H1 (cell line): ENCODE measurements at regions of chr9 and their contacts with region 1.

Region 1: GRCh38 chr9:130243015-130243734 is 22.4 kb upstream of the HMCN2 start:
- DNase-seq: peak in 1 of 2 experiments; percentile 98
- H3K4me3 ChIP-seq: peak overlapping the region in 1 of 4 experiments; percentile 27; a peak in 3 of 8 replicates
- H3K27ac ChIP-seq: no peak overlapping the region
- H3K4me1 ChIP-seq: peaks cover 0 to 9% (median 4%) of the 10 kb centered on the region in 4 experiments; a peak in 4 of 7 replicates
- H3K27me3 ChIP-seq: peaks cover 0 to 4% (median 0%) of the 10 kb centered on the region in 4 experiments; a peak in 2 of 7 replicates
- CTCF ChIP-seq: peak in 2 of 3 experiments; percentile 83 to 97; a peak in 3 of 4 replicates
- EP300 ChIP-seq: no peak
- POLR2A ChIP-seq: no peak
- RAD21 ChIP-seq: peak; percentile 62 to 75

Region 2: DNA sequence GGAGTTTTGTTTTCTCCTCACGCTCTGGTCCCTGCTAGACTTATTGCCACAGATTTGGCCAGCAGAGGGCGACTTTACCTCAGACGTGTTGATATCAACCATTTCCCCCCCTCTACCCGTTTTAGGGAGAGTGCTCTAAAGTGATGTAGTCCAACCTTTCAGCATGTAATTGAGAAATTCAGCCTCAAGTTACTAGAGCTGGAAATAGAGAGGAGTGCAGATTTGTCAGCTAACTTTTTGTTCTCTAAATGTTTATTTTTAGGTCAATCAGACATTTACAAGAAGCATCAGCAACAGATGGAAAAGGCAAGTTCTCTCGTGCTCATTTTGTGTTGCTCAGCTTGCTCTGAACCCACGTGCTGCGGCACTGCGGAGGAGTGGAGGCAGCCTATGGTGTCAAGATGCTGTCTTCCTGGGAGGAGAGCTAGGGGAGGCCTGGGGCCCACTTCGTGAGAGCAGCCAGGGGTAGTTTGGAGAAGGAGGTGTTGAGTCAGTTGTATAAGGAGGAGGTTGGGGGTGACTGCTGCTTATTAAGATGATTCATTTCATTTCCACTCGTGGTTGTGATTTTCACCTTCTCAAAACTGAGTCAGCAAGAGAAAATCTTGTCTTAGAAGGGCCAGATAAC is 135.8 kb before region 1 on chr9:
- CTCF ChIA-PET with region 1: interaction called, 21 read pairs
- POLR2A ChIA-PET with region 1: interaction called, 4 read pairs
- DNase-seq: peak; percentile 19 to 89
- H3K4me3 ChIP-seq: no peak overlapping the region
- H3K27ac ChIP-seq: no peak overlapping the region
- H3K4me1 ChIP-seq: peaks cover 0 to 3% (median 0%) of the 10 kb centered on the region in 4 experiments; a peak in 1 of 7 replicates
- H3K27me3 ChIP-seq: no peaks in the 10 kb centered on the region
- CTCF ChIP-seq: peak; percentile 56 to 86 (median 84)
- EP300 ChIP-seq: no peak
- POLR2A ChIP-seq: no peak
- RAD21 ChIP-seq: peak; percentile 91

Region 3: DNA sequence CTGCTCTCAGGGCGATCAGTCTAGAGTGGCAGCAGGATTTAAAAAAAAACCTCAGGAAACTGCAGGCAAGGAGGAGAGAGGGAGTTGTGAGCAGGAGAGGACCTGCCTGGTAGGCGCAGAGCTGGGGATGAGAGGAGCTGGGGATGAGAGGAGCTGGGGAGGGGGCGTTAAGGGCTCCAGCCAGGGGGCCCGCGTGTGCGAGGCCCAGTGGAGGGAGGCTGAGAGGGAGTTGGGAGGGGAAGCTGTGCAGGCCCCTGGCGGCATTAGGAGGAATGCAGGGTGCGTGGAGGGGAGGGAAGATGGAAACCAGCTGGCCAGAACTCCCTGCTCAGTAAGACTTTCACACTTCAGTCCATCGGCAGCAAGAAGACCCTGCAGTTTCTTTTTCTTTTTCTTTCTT is 22.8 kb before region 1 on chr9:
- CTCF ChIA-PET with region 1: interaction called, 16 read pairs
- POLR2A ChIA-PET with region 1: interaction called, 5 read pairs
- DNase-seq: no peak
- H3K4me3 ChIP-seq: no peak overlapping the region
- H3K27ac ChIP-seq: no peak overlapping the region
- H3K4me1 ChIP-seq: peaks cover 0 to 7% (median 0%) of the 10 kb centered on the region in 4 experiments; a peak in 5 of 7 replicates
- H3K27me3 ChIP-seq: no peaks in the 10 kb centered on the region
- CTCF ChIP-seq: peak in 2 of 3 experiments; percentile 10 to 29; a peak in 2 of 4 replicates
- EP300 ChIP-seq: no peak
- POLR2A ChIP-seq: no peak
- RAD21 ChIP-seq: peak; percentile 14 to 22; a peak in 2 of 4 replicates

Region 4: DNA sequence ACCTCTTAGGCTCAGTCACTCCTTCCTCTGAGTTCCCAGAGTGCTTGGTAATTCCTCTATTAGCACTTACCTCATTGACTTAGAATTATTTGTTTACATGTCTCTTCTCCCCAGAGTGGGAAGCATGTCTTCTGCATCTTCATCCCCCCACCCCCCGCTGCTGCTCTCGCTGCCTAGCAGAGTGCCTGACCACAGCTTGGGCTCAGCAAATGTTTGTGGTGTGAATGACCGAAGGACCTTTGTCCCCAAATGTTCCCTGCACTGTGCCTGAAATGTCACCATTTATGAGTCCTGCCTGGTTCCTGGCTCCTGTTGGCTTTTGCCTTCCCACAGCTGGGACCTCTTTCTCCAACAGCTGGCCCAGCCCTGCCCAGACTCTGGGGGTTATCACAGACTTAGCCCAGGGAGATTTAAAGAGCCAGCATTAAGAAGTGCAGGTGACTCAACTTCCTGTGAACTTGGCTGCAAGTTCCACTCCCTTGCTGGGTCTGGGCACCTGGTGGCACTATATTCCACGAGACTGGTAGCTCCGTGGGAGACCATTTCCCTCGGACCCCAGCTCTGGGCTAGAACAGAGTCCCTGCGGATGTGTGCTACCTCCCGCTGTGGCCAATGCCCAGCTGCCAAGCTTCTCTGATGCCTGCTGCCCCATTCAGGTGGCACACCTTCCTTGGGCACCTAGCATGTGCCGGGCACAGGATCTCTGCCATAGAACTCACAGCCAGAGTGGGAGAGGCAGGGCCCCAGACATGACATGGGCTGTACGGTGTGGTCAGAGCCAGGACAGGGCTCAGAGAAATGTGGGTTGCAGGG is 20.6 kb after region 1 on chr9:
- CTCF ChIA-PET with region 1: interaction called, 22 read pairs
- POLR2A ChIA-PET with region 1: interaction called, 4 read pairs
- DNase-seq: no peak
- H3K4me3 ChIP-seq: no peak overlapping the region
- H3K27ac ChIP-seq: no peak overlapping the region
- H3K4me1 ChIP-seq: peaks cover 10 to 24% (median 15%) of the 10 kb centered on the region in 4 experiments
- H3K27me3 ChIP-seq: peaks cover 0 to 20% (median 14%) of the 10 kb centered on the region in 4 experiments; a peak in 6 of 7 replicates
- CTCF ChIP-seq: peak in 1 of 3 experiments; percentile 14; a peak in 1 of 4 replicates
- EP300 ChIP-seq: no peak
- POLR2A ChIP-seq: no peak
- RAD21 ChIP-seq: peak; percentile 22 to 45

Region 5: DNA sequence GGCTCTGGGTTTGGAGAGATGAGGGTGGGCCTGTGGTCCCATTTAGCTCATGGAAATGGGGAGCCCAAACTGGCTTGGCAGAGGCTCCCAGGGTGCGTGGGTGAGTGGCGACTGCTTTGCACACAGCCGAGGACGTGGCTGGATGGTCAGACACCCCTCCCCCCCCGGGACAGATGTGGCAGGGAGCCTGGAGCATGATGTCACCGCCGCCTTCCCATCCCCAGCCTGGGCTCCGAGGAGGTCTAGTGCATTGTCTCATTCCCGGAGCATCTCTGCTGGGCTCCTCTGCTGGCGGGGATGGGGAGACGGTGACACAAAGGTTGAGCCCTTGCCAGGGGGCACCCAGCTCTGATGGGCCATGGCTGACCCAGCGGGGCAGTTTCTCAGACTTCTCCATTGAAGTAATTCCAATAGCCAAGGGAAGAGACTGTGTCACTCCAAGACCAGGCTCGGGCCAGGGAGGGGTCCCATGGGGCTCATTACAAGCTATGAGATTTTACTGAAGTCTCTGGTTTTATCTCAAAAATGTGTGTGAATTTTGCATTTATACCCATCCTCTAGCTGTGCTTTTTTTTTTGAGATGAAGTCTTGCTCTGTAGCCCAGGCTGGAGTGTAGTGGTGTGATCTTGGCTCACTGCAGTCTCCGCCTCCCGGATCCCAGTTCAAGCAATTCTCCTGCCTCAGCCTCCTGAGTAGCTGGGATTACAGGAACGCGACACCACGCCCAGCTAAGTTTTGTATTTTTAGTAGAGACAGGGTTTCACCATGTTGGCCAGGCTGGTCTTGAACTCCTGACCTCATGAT is 58.5 kb after region 1 on chr9:
- CTCF ChIA-PET with region 1: interaction called, 12 read pairs
- POLR2A ChIA-PET with region 1: interaction called, 3 read pairs
- DNase-seq: no peak
- H3K4me3 ChIP-seq: no peak overlapping the region
- H3K27ac ChIP-seq: no peak overlapping the region
- H3K4me1 ChIP-seq: peaks cover 0 to 2% (median 0%) of the 10 kb centered on the region in 4 experiments; a peak in 2 of 7 replicates
- H3K27me3 ChIP-seq: no peaks in the 10 kb centered on the region
- CTCF ChIP-seq: no peak
- EP300 ChIP-seq: no peak
- POLR2A ChIP-seq: no peak
- RAD21 ChIP-seq: no peak

Region 6: GRCh38 chr9:130343445-130343918 is 100.3 kb after region 1 on chr9:
- CTCF ChIA-PET with region 1: interaction called, 63 read pairs
- POLR2A ChIA-PET with region 1: interaction called, 3 read pairs
- DNase-seq: peak in 1 of 2 experiments; percentile 95
- H3K4me3 ChIP-seq: no peak overlapping the region
- H3K27ac ChIP-seq: no peak overlapping the region
- H3K4me1 ChIP-seq: peaks cover 0 to 12% (median 6%) of the 10 kb centered on the region in 4 experiments; a peak in 4 of 7 replicates
- H3K27me3 ChIP-seq: no peaks in the 10 kb centered on the region
- CTCF ChIP-seq: peak in 2 of 3 experiments; percentile 78 to 88; a peak in 3 of 4 replicates
- EP300 ChIP-seq: no peak
- POLR2A ChIP-seq: no peak
- RAD21 ChIP-seq: peak; percentile 94 to 96

Region 7: DNA sequence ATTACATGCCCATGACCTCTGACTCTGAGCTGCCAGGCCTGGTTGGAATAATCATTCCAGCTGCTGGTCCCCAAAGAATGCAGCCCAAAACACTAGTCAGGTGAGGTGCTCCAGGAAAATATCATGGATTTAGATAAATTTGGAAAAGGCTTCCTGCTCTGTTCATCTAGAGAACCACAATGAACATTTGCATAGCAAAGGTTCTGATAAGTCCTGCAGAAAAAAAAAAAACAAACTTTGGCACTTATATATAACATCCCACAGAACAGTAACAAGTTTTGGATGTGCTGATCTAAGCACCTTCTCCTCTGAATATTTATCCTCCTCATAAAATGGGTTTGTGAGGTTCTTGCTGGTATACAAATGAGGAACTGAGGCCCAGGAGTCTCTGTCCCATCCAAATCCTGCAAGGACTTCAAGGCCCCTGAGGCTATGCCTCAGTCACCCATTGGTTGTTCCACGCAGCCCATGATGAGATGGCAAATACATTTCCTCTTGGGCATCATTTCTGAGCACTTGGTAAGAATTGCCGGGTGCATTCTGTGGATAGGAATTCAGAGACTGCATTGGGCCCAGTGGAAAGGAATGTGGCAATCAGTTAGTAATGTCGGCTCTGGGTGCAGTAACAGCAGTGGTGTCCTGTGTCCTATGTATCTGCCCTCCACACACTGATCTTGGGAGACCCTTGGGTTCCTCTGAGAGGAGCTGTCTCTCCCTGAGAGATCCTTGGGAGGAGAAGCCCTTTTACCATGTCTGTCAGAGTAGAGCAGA is 128.2 kb after region 1 on chr9:
- CTCF ChIA-PET with region 1: no interaction called
- POLR2A ChIA-PET with region 1: no interaction called
- DNase-seq: no peak
- H3K4me3 ChIP-seq: no peak overlapping the region
- H3K27ac ChIP-seq: no peak overlapping the region
- H3K4me1 ChIP-seq: peaks cover 0 to 3% (median 0%) of the 10 kb centered on the region in 4 experiments; a peak in 1 of 7 replicates
- H3K27me3 ChIP-seq: no peaks in the 10 kb centered on the region
- CTCF ChIP-seq: no peak
- EP300 ChIP-seq: no peak
- POLR2A ChIP-seq: no peak
- RAD21 ChIP-seq: no peak

Region 8: GRCh38 chr9:130663258-130663976 is 420.2 kb after region 1 on chr9:
- CTCF ChIA-PET with region 1: no interaction called
- POLR2A ChIA-PET with region 1: no interaction called
- DNase-seq: peak in 1 of 2 experiments; percentile 72
- H3K4me3 ChIP-seq: peak overlapping the region; percentile 31 to 62 (median 33)
- H3K27ac ChIP-seq: no peak overlapping the region
- H3K4me1 ChIP-seq: peaks cover 4 to 45% (median 28%) of the 10 kb centered on the region in 4 experiments
- H3K27me3 ChIP-seq: peaks cover 95 to 100% (median 100%) of the 10 kb centered on the region in 4 experiments
- CTCF ChIP-seq: no peak
- EP300 ChIP-seq: no peak
- POLR2A ChIP-seq: no peak
- RAD21 ChIP-seq: no peak